ENCODE measurements at regions of chr1 and their contacts with region 1.

Region 1: GRCh38 chr1:145845514-145846161 is at the start of gene NUDT17:
- DNase-seq: peak; percentile 79 to 93
- ATAC-seq: peak; percentile 82 to 89
- H3K4me3 ChIP-seq: peak within 1 kb of the TSS; percentile 55
- H3K27ac ChIP-seq: peak within 1 kb of the TSS; percentile 82 to 95
- H3K4me1 ChIP-seq: peaks cover 4% of the 10 kb centered on the region; the same call in 1 of the 3 replicates
- CTCF ChIP-seq: peak; percentile 92
- EP300 ChIP-seq: no peak
- POLR2A ChIP-seq: peak; percentile 51
- RAD21 ChIP-seq: peak; percentile 57 to 66
- polyA plus RNA-seq, gene NUDT17: 6.7 and 9.0 TPM in 2 replicates

Region 2: DNA sequence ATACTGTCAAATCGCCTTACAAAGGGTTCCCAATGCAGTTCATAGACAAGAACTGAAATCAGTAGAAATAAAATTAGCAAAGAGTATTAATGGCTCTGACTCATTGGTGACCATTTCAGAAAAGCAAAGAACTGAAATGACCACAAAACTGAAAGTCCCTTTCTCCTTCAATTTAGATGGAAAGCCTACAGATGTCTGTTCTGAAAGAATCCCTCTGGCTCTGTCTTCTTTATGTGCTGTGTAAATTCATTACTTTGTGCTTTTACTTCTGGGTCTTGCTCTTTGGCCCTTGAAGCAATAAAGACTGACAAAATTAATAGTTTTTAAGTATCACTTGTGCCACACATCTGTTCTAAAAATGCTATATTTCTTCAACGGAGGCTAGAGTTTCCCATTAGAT is 300.6 kb before region 1 on chr1:
- CTCF ChIA-PET with region 1: no interaction called
- POLR2A ChIA-PET with region 1: no interaction called
- DNase-seq: no peak
- ATAC-seq: no peak
- H3K4me3 ChIP-seq: no peak overlapping the region
- H3K27ac ChIP-seq: no peak overlapping the region
- H3K4me1 ChIP-seq: no peaks in the 10 kb centered on the region
- CTCF ChIP-seq: no peak
- EP300 ChIP-seq: no peak
- POLR2A ChIP-seq: no peak
- RAD21 ChIP-seq: no peak

Region 3: DNA sequence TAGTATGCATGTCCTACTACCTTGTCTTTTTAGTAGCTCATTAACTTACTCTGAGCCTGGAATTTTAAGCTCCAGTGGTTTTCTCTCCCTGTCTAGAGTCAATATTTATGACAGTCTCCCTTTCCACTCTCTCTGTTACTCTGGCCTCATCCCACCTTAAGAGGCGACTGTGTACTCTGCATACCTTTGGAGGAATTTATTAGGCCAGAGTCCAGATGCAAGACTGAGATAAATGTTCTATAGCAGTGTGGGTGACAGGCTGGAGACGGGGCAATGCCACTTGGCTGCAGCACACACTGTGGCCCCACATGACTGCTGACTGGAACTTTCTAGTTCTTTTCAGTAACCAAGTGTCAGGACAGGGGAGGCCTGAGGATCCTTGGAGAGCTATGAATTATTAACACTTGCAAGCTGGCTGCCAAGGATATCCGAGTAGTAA is 134.4 kb before region 1 on chr1:
- CTCF ChIA-PET with region 1: no interaction called
- POLR2A ChIA-PET with region 1: no interaction called
- DNase-seq: peak in 1 of 2 experiments; percentile 77
- ATAC-seq: peak; percentile 58 to 73; a peak in 4 of 6 replicates
- H3K4me3 ChIP-seq: no peak overlapping the region
- H3K27ac ChIP-seq: peak overlapping the region; percentile 67 to 75; a peak in 5 of 6 replicates
- H3K4me1 ChIP-seq: peaks cover 50% of the 10 kb centered on the region
- CTCF ChIP-seq: no peak
- EP300 ChIP-seq: no peak
- POLR2A ChIP-seq: no peak
- RAD21 ChIP-seq: no peak; a peak in 1 of 5 replicates

Region 4: GRCh38 chr1:145823565-145824498 is 21.8 kb before region 1 on chr1 and contains the starts of genes POLR3C and RNF115:
- CTCF ChIA-PET with region 1: interaction called, 109 read pairs
- POLR2A ChIA-PET with region 1: interaction called, 16 read pairs
- DNase-seq: peak; percentile 83 to 93
- ATAC-seq: peak; percentile 96 to 97
- H3K4me3 ChIP-seq: peak within 1 kb of the TSS; percentile 75
- H3K27ac ChIP-seq: peak within 1 kb of the TSS; percentile 94 to 97
- H3K4me1 ChIP-seq: peaks cover 11% of the 10 kb centered on the region
- CTCF ChIP-seq: no peak
- EP300 ChIP-seq: no peak
- POLR2A ChIP-seq: peak; percentile 60
- RAD21 ChIP-seq: peak; percentile 5 to 17; a peak in 2 of 5 replicates
- polyA plus RNA-seq, gene POLR3C: 58.3 and 65.0 TPM in 2 replicates
- polyA plus RNA-seq, gene RNF115: 18.4 and 18.8 TPM in 2 replicates

Region 5: DNA sequence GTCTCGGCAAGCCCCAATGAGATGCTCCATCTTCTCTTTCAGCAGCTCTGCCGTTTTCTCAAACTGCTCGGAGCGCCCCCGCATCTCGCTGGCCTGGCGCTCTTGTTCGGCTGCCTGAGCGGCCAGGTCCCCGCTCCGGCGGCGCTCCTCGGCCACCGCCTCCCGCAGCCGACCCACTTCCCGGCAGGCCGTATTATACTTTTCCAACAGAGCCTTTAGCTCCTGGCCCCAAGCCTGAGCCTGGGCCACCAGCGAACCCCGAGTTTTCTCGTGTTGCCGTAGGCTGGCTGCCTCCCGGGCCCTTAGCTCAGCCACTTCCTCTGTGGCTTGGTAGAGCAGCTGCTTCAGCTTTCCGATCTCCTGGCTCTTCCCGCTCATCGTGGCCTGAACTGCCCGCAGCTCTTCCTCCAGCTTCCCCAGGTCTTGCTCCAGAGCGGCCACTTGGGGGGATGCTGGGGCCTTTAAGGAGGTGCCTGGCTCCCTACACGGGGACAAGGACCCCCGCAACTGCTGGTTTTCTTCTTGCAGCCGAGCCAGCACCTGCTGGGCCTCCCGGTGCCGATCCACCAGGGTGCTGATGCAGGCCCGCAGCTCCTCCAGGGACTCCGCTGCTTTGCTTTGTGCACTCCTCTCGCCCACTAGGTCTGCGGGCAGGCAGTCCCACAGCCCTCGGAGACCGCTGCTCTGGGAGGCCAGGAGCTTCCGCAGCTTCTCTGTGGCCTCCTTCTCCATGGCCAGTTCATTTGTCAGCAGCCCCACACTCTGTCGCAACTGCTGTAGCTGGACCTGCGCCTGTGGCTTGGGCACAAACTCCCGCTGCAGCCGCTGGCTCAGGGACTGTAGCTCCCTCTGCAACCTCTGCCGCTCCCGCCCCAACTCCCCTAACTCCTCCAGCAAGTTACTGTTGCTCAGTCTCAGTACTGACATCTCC is 26.6 kb after region 1 on chr1:
- CTCF ChIA-PET with region 1: interaction called, 19 read pairs
- POLR2A ChIA-PET with region 1: no interaction called
- DNase-seq: no peak
- ATAC-seq: peak in 1 of 2 experiments; percentile 22; a peak in 2 of 6 replicates
- H3K4me3 ChIP-seq: no peak overlapping the region
- H3K27ac ChIP-seq: no peak overlapping the region
- H3K4me1 ChIP-seq: no peaks in the 10 kb centered on the region
- CTCF ChIP-seq: no peak
- EP300 ChIP-seq: no peak
- POLR2A ChIP-seq: no peak
- RAD21 ChIP-seq: no peak

Region 6: DNA sequence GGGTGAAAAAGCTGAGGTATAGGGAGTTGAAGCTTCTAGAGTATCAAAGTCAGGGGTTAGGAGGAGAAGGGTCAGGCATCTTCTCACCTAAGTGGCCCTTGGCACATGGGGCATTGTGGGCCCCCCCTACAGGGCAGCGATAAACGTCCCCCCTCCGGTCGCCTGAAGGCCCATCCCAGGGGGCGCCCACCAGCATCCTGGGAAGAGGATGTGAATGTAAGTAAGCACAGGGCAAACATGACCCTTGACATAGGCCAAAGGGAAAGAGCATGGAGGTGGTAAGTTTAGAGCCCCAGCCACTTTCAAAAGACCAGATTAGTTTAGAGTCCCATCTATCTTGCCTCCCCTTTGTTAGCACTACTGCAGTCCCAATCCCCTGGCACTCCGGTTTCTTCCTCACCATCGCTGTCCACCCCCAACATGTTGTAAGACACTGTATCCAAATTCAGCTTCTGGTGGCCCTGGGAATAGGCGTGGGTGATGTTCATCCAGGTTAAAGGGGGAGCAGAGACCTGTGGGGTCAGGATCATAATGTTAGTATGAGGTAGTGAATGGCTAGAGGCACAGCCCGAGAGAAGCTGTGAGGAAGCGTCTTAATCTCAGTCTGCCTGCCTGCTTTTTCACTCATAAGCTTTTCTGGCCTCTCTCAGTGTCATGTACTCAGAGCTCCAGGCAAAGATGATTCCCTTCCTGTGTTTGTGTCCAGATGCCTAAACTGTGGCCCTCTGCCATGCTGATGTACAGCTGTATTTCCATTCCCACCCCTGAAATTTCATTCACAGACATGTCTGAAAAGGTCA is 61.5 kb after region 1 on chr1:
- CTCF ChIA-PET with region 1: interaction called, 71 read pairs
- POLR2A ChIA-PET with region 1: interaction called, 3 read pairs
- DNase-seq: no peak
- ATAC-seq: no peak
- H3K4me3 ChIP-seq: no peak overlapping the region
- H3K27ac ChIP-seq: peak overlapping the region; percentile 39 to 42; a peak in 4 of 6 replicates
- H3K4me1 ChIP-seq: peaks cover 4% of the 10 kb centered on the region; the same call in 1 of the 3 replicates
- CTCF ChIP-seq: no peak
- EP300 ChIP-seq: no peak
- POLR2A ChIP-seq: no peak
- RAD21 ChIP-seq: no peak

Region 7: GRCh38 chr1:145927063-145927886 is 81.6 kb after region 1 on chr1 and contains the start of gene RBM8A:
- CTCF ChIA-PET with region 1: interaction called, 10 read pairs
- POLR2A ChIA-PET with region 1: interaction called, 11 read pairs
- DNase-seq: peak; percentile 86 to 99
- ATAC-seq: peak; percentile 98
- H3K4me3 ChIP-seq: peak within 1 kb of the TSS; percentile 84
- H3K27ac ChIP-seq: peak within 1 kb of the TSS; percentile 97
- H3K4me1 ChIP-seq: peaks cover 10% of the 10 kb centered on the region; the same call in 2 of the 3 replicates
- CTCF ChIP-seq: peak; percentile 60
- EP300 ChIP-seq: no peak
- POLR2A ChIP-seq: peak; percentile 92
- RAD21 ChIP-seq: peak; percentile 15 to 20; a peak in 1 of 5 replicates
- polyA plus RNA-seq, gene RBM8A: 152 and 281 TPM in 2 replicates

Region 8: GRCh38 chr1:145978854-145979759 is 133.5 kb after region 1 on chr1:
- CTCF ChIA-PET with region 1: interaction called, 39 read pairs
- POLR2A ChIA-PET with region 1: no interaction called
- DNase-seq: peak in 1 of 2 experiments; percentile 82
- ATAC-seq: peak; percentile 58 to 75; a peak in 5 of 6 replicates
- H3K4me3 ChIP-seq: no peak overlapping the region
- H3K27ac ChIP-seq: peak overlapping the region; percentile 25 to 33; a peak in 4 of 6 replicates
- H3K4me1 ChIP-seq: peaks cover 10% of the 10 kb centered on the region; the same call in 2 of the 3 replicates
- CTCF ChIP-seq: no peak
- EP300 ChIP-seq: no peak
- POLR2A ChIP-seq: no peak
- RAD21 ChIP-seq: no peak

Region 9: DNA sequence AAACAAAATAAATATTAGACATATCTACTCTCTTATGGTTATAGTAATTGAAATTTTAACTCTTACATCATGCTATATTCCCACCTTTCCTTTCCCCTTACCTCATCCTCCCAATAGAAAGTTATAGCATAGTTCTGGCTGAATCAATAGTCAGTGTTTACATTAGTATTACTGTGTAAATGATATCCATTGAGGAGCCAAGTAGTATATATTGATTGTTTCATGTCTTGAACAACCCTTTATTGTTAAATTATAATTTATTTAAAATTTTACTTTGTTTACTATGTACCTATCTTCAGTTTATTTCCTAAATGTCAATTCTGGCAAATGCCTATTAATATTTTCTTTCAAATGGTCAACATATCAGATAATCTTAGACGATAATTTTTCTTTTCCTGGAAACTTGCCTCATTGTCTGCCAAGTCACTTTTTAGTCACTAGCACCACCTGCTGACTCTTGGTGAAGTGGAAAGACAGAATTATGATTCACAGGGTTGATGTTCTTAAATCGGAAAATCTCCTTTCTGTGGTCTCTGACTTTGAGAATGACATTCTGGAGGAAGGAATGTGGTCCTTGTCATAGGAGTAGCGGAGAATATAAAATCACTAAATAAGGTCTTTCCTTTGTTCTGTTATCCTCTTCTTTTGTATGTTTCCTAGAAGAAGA is 167.2 kb after region 1 on chr1:
- CTCF ChIA-PET with region 1: interaction called, 85 read pairs
- POLR2A ChIA-PET with region 1: no interaction called
- DNase-seq: peak; percentile 69 to 82
- ATAC-seq: peak; percentile 70 to 83; a peak in 5 of 6 replicates
- H3K4me3 ChIP-seq: no peak overlapping the region
- H3K27ac ChIP-seq: no peak overlapping the region
- H3K4me1 ChIP-seq: peaks cover 3% of the 10 kb centered on the region; the same call in 1 of the 3 replicates
- CTCF ChIP-seq: peak; percentile 96
- EP300 ChIP-seq: no peak
- POLR2A ChIP-seq: no peak
- RAD21 ChIP-seq: peak; percentile 93 to 96